Activated CD4-positive, alpha-beta memory T cell treated with anti-CD3 and anti-CD28 coated beads for 36 hours (primary cell): ENCODE measurements at regions of chr15 and their contacts with region 1.

Region 1: DNA sequence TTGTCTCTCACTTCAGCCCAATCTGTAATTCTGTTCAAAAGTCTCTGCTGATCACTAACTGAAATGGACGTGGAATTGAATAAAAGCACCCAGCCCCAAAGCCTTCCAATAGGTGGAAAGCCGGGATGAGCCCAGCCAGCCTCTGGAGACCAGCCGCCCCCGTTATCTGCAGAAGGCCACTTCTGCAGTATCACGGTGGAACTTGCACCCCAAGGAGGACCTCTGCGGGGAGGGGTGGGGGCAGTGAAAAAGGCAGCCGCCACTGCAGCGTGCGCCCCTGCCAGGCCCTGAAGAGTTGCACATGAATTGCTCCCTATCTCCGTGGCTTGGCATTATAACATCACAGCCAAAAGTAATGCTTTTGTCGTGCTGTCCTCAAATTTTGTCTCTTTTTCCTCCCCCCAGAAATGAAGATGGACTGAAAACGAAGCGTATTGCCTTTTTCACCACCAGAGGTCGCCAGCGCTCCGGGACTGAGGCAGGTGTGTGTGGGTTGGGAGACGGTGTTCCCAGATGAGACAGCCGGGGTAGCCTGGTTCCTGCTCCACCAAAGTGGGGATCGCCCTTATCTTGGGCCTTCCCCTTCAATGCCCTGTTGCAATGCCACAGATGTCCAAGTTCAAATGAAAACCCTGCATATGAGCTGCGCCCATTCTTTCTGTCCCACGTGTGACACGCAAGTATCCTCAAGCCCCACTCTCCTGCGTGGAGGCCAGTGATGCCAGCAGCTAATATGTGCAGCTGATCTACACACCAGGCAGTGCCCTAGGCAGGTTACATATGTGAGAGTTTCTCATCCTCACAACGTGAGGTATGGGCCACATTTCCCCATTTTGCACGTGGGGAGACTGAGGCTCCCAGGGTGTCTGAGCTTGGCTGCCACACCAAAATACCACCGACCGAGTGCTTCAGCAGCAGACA is 96.0 kb downstream of the LRRK1 start:
- DNase-seq: peak; percentile 80
- H3K4me3 Mint-ChIP-seq: no peak overlapping the region
- H3K27ac Mint-ChIP-seq: no peak overlapping the region
- H3K4me1 Mint-ChIP-seq: peaks cover 4% of the 10 kb centered on the region
- H3K27me3 Mint-ChIP-seq: peaks cover 3% of the 10 kb centered on the region

Region 2: GRCh38 chr15:100987143-100987542 is 28.0 kb before region 1 on chr15:
- CTCF ChIA-PET with region 1: no interaction called
- POLR2A ChIA-PET with region 1: no interaction called
- intact Hi-C with region 1: no loop called
- DNase-seq: no peak
- H3K4me3 Mint-ChIP-seq: no peak overlapping the region
- H3K27ac Mint-ChIP-seq: no peak overlapping the region
- H3K4me1 Mint-ChIP-seq: no peaks in the 10 kb centered on the region
- H3K27me3 Mint-ChIP-seq: peaks cover 11% of the 10 kb centered on the region

Region 3: GRCh38 chr15:101088788-101089583 is 73.8 kb after region 1 on chr15:
- CTCF ChIA-PET with region 1: interaction called, 4 read pairs
- POLR2A ChIA-PET with region 1: no interaction called
- intact Hi-C with region 1: loop called (anchors 5 kb)
- DNase-seq: peak; percentile 84
- H3K4me3 Mint-ChIP-seq: no peak overlapping the region
- H3K27ac Mint-ChIP-seq: no peak overlapping the region
- H3K4me1 Mint-ChIP-seq: no peaks in the 10 kb centered on the region
- H3K27me3 Mint-ChIP-seq: peaks cover 1% of the 10 kb centered on the region